ENCODE measurements at regions of chr21 and their contacts with region 1.

Region 1: DNA sequence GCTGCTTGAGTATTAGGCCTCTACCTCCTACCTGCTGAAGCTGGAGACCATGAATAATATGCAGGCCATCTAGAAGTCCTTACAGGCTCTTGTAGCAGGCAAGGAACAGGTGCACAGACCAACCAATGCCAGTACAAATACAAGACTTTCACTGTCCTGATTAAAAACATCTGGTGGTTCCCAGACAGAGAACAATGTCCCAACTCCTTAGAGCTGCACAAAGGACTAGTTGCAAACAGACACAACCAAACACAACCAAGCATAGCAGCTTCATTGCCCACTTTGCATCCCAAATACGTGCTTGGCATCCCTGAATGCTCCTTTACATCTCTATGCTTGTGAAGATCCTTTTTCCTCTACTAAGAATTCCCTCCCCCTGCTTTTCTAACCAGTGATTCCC is 98.1 kb upstream of the CXADR start:
- DNase-seq: no peak
- H3K4me3 Mint-ChIP-seq: no peak overlapping the region
- H3K27ac Mint-ChIP-seq: no peak overlapping the region
- H3K4me1 Mint-ChIP-seq: peaks cover 10% of the 10 kb centered on the region
- H3K27me3 Mint-ChIP-seq: no peaks in the 10 kb centered on the region
- CTCF ChIP-seq: no peak

Region 2: GRCh38 chr21:17295997-17296396 is 118.8 kb before region 1 on chr21:
- CTCF ChIA-PET with region 1: no interaction called
- intact Hi-C with region 1: no loop called
- DNase-seq: no peak
- H3K4me3 Mint-ChIP-seq: no peak overlapping the region
- H3K27ac Mint-ChIP-seq: no peak overlapping the region
- H3K4me1 Mint-ChIP-seq: no peaks in the 10 kb centered on the region
- H3K27me3 Mint-ChIP-seq: no peaks in the 10 kb centered on the region
- CTCF ChIP-seq: no peak

Region 3: GRCh38 chr21:17343055-17343454 is 71.7 kb before region 1 on chr21:
- CTCF ChIA-PET with region 1: no interaction called
- intact Hi-C with region 1: no loop called
- DNase-seq: peak; percentile 4
- H3K4me3 Mint-ChIP-seq: no peak overlapping the region
- H3K27ac Mint-ChIP-seq: no peak overlapping the region
- H3K4me1 Mint-ChIP-seq: no peaks in the 10 kb centered on the region
- H3K27me3 Mint-ChIP-seq: no peaks in the 10 kb centered on the region
- CTCF ChIP-seq: no peak

Region 4: GRCh38 chr21:17461014-17461413 is 46.2 kb after region 1 on chr21:
- CTCF ChIA-PET with region 1: no interaction called
- intact Hi-C with region 1: loop called (anchors 2 kb)
- DNase-seq: no peak
- H3K4me3 Mint-ChIP-seq: no peak overlapping the region
- H3K27ac Mint-ChIP-seq: no peak overlapping the region
- H3K4me1 Mint-ChIP-seq: peaks cover 19% of the 10 kb centered on the region
- H3K27me3 Mint-ChIP-seq: no peaks in the 10 kb centered on the region
- CTCF ChIP-seq: no peak

Region 5: GRCh38 chr21:17554679-17555465 is 140.1 kb after region 1 on chr21:
- CTCF ChIA-PET with region 1: no interaction called
- intact Hi-C with region 1: no loop called
- DNase-seq: no peak
- H3K4me3 Mint-ChIP-seq: no peak overlapping the region
- H3K27ac Mint-ChIP-seq: no peak overlapping the region
- H3K4me1 Mint-ChIP-seq: peaks cover 27% of the 10 kb centered on the region
- H3K27me3 Mint-ChIP-seq: no peaks in the 10 kb centered on the region
- CTCF ChIP-seq: no peak

Region 6: GRCh38 chr21:17758657-17759056 is 343.9 kb after region 1 on chr21:
- CTCF ChIA-PET with region 1: no interaction called
- intact Hi-C with region 1: no loop called
- DNase-seq: no peak
- H3K4me3 Mint-ChIP-seq: no peak overlapping the region
- H3K27ac Mint-ChIP-seq: no peak overlapping the region
- H3K4me1 Mint-ChIP-seq: no peaks in the 10 kb centered on the region
- H3K27me3 Mint-ChIP-seq: no peaks in the 10 kb centered on the region
- CTCF ChIP-seq: no peak